Natural killer cell (primary cell): ENCODE measurements at regions of chr6 and their contacts with region 1.

Region 1: GRCh38 chr6:17706580-17707370 is at the start of gene NUP153:
- DNase-seq: peak; percentile 100
- ATAC-seq: peak; percentile 70 to 87 (median 75)
- H3K4me3 ChIP-seq: peak within 1 kb of the TSS; percentile 98
- H3K4me3 Mint-ChIP-seq: peak within 1 kb of the TSS; percentile 89
- H3K27ac ChIP-seq: peak within 1 kb of the TSS; percentile 100
- H3K27ac Mint-ChIP-seq: peak within 1 kb of the TSS; percentile 95 to 98
- H3K4me1 ChIP-seq: peaks cover 35% of the 10 kb centered on the region
- H3K4me1 Mint-ChIP-seq: peaks cover 39 to 40% of the 10 kb centered on the region in 2 donors
- H3K27me3 ChIP-seq: no peaks in the 10 kb centered on the region
- H3K27me3 Mint-ChIP-seq: no peaks in the 10 kb centered on the region
- CTCF ChIP-seq: no peak
- total RNA-seq, gene NUP153: 67.5 to 74.9 (median 68.0) TPM

Region 2: DNA sequence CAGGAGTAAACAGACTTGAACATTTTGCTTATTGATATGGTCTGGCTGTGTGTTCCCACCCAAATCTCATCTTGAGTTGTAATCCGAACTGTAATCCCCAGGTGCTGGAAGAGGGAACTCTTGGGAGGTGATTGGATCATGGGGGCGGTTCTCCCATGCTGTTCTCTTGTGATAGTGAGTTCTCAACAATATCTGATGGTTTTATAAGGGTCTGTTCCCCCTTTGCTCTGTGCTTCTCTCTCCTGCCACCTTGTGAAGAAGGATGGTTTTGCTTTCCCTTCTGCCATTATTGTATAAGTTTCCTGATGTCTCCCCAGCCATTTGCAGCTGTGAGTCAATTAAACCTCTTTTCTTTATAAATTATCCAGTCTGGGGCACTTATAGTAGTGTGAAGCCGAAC is 1537.9 kb before region 1 on chr6:
- intact Hi-C with region 1: no loop called
- DNase-seq: peak in 1 of 2 donors; percentile 56
- ATAC-seq: peak; percentile 46 to 66 (median 62)
- H3K4me3 ChIP-seq: no peak overlapping the region
- H3K4me3 Mint-ChIP-seq: peak overlapping the region; percentile 76
- H3K27ac ChIP-seq: peak overlapping the region; percentile 1
- H3K27ac Mint-ChIP-seq: peak overlapping the region; percentile 79 to 86
- H3K4me1 ChIP-seq: peaks cover 14% of the 10 kb centered on the region
- H3K4me1 Mint-ChIP-seq: peaks cover 58 to 62% of the 10 kb centered on the region in 2 donors
- H3K27me3 ChIP-seq: no peaks in the 10 kb centered on the region
- H3K27me3 Mint-ChIP-seq: no peaks in the 10 kb centered on the region
- CTCF ChIP-seq: peak; percentile 41

Region 3: DNA sequence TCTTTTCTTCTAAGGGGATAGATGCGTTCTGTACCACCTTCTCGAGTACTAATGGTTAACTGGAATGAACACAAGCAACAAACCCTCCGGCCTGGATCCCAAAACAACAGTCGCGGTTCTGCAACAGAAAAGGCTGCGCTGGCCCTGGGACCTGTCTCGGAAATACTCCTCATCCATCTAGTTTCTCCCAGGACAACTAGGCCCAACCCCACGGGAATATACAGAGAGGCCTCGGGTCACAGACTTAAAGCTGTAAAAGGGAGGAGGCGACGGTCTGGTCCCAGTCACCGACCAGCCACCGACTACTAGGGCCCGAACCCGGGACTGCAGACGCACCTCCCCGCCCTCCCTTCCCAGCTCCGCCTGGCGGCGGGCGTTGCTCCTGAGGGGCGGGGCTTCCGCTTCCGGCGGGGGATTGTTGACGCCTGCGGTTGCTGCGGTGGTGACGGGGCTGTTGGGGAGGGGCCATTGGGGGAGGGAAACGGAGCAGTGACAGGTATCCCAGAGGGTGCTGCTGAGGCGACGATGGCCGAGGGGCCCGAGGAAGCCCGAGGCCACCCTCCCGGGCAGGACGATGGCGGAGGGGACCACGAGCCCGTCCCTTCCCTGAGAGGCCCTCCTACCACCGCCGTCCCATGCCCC is 106.8 kb before region 1 on chr6 and contains the start of gene FAM8A1:
- intact Hi-C with region 1: loop called (anchors 1 kb)
- DNase-seq: peak; percentile 91 to 97
- ATAC-seq: peak; percentile 86 to 93 (median 88)
- H3K4me3 ChIP-seq: peak within 1 kb of the TSS; percentile 76
- H3K4me3 Mint-ChIP-seq: peak within 1 kb of the TSS; percentile 97
- H3K27ac ChIP-seq: peak within 1 kb of the TSS; percentile 73
- H3K27ac Mint-ChIP-seq: peak within 1 kb of the TSS; percentile 96 to 98
- H3K4me1 ChIP-seq: peaks cover 16% of the 10 kb centered on the region
- H3K4me1 Mint-ChIP-seq: peaks cover 45 to 46% of the 10 kb centered on the region in 2 donors
- H3K27me3 ChIP-seq: no peaks in the 10 kb centered on the region
- H3K27me3 Mint-ChIP-seq: no peaks in the 10 kb centered on the region
- CTCF ChIP-seq: peak; percentile 34
- total RNA-seq, gene FAM8A1: 32.1 to 45.4 (median 35.5) TPM

Region 4: DNA sequence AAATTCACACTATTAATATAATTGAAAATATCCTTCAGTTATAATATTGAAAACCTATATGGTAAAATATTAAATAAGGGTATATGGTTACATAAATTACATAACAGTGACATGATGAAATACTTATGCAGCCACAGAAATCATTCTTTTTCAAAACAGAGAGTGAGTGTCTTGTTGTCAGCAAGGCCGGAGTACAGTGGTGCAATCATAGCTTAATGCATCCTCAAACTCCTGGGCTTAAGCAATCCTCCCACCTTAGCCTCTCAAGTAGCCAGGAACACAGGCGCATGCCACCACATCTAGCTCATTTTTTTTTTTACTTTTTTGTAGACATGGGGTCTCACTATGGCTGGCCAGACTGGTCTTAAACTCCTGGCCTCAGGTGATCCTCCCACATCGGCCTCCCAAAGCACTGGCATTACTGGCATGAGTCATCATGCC is 66.3 kb before region 1 on chr6:
- intact Hi-C with region 1: no loop called
- DNase-seq: no peak
- ATAC-seq: no peak
- H3K4me3 ChIP-seq: no peak overlapping the region
- H3K4me3 Mint-ChIP-seq: no peak overlapping the region
- H3K27ac ChIP-seq: no peak overlapping the region
- H3K27ac Mint-ChIP-seq: peak overlapping the region; percentile 49 to 54
- H3K4me1 ChIP-seq: no peaks in the 10 kb centered on the region
- H3K4me1 Mint-ChIP-seq: peaks cover 9 to 23% of the 10 kb centered on the region in 2 donors
- H3K27me3 ChIP-seq: no peaks in the 10 kb centered on the region
- H3K27me3 Mint-ChIP-seq: no peaks in the 10 kb centered on the region
- CTCF ChIP-seq: no peak

Region 5: DNA sequence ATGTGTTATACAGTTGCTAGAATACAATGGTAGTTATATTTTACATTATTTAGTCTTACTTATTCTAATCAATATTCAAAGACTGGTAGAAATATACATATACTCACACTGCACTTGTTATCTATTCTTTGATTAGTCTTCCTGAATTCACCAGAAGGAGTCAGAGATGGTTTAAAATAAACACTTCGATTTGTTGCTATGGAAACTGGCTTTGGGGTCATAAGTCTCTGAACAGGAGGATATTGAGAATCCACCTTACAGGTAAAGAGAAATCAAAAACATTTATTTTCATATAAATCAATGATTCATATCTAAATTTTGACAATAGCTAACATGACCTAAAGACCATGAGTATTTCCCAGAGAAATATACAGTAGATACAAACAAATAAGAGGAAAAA is 41.6 kb before region 1 on chr6:
- intact Hi-C with region 1: loop called (anchors 5 kb)
- DNase-seq: peak in 1 of 2 donors; percentile 44
- ATAC-seq: no peak
- H3K4me3 ChIP-seq: no peak overlapping the region
- H3K4me3 Mint-ChIP-seq: peak overlapping the region; percentile 63
- H3K27ac ChIP-seq: peak overlapping the region; percentile 81
- H3K27ac Mint-ChIP-seq: peak overlapping the region; percentile 76 to 93
- H3K4me1 ChIP-seq: peaks cover 16% of the 10 kb centered on the region
- H3K4me1 Mint-ChIP-seq: peaks cover 36 to 46% of the 10 kb centered on the region in 2 donors
- H3K27me3 ChIP-seq: no peaks in the 10 kb centered on the region
- H3K27me3 Mint-ChIP-seq: no peaks in the 10 kb centered on the region
- CTCF ChIP-seq: no peak

Region 6: GRCh38 chr6:18122124-18123093 is 415.6 kb after region 1 on chr6 and contains the start of gene NHLRC1:
- intact Hi-C with region 1: loop called (anchors 10 kb)
- DNase-seq: peak; percentile 81 to 84
- ATAC-seq: peak; percentile 99 to 100 (median 99)
- H3K4me3 ChIP-seq: peak within 1 kb of the TSS; percentile 38
- H3K4me3 Mint-ChIP-seq: peak within 1 kb of the TSS; percentile 91
- H3K27ac ChIP-seq: no peak within 1 kb of the TSS
- H3K27ac Mint-ChIP-seq: peak within 1 kb of the TSS; percentile 43 to 90
- H3K4me1 ChIP-seq: peaks cover 13% of the 10 kb centered on the region
- H3K4me1 Mint-ChIP-seq: peaks cover 8 to 13% of the 10 kb centered on the region in 2 donors
- H3K27me3 ChIP-seq: no peaks in the 10 kb centered on the region
- H3K27me3 Mint-ChIP-seq: no peaks in the 10 kb centered on the region
- CTCF ChIP-seq: peak; percentile 81
- total RNA-seq, gene NHLRC1: 0.58 to 0.89 (median 0.68) TPM

Region 7: DNA sequence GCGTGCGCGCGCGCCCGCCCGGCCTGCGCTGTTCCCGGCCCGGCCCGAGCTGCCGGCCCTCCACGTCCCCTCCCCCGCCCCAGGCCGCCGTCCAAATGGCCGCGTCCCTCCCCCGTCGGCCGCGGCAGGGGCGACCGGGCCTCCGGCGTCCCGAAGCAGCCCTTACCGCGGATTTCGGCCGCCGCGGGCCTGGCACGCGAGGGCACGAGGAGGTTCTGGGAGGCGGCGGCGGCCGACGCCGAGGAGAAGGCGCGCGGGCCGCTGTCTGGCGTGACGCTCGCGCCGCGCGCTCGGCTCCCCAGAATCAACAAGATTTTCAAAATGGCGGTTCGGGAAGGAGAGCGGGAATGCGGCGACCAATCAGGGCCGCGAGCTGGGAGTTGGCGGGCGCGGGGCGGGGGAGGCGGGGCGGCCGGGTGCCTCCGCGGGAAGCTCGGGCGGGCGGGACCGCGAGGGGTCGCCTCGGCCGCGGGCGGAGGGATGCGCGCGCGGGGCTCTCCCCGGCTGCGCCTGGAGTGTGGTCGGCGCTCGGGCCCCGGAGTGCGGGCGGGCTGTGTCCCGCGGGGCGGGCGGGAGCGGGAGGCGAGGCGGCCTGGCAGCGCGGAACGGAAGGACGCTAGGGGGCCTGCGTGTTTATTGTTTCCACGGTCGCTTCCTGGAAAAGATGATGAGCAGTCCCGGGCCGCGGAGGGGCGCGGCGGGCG is 557.6 kb after region 1 on chr6 and contains the start of gene DEK:
- intact Hi-C with region 1: loop called (anchors 2 kb)
- DNase-seq: peak; percentile 73 to 88
- ATAC-seq: peak; percentile 66 to 83 (median 73)
- H3K4me3 ChIP-seq: peak within 1 kb of the TSS; percentile 84
- H3K4me3 Mint-ChIP-seq: peak within 1 kb of the TSS; percentile 97
- H3K27ac ChIP-seq: peak within 1 kb of the TSS; percentile 81
- H3K27ac Mint-ChIP-seq: peak within 1 kb of the TSS; percentile 91 to 94
- H3K4me1 ChIP-seq: peaks cover 31% of the 10 kb centered on the region
- H3K4me1 Mint-ChIP-seq: peaks cover 54 to 56% of the 10 kb centered on the region in 2 donors
- H3K27me3 ChIP-seq: no peaks in the 10 kb centered on the region
- H3K27me3 Mint-ChIP-seq: no peaks in the 10 kb centered on the region
- CTCF ChIP-seq: peak; percentile 41
- total RNA-seq, gene DEK: 79.5 to 89.7 (median 80.9) TPM